Activated CD8-positive, alpha-beta T cell treated with anti-CD3 and anti-CD28 coated beads for 36 hours (primary cell): ENCODE measurements at regions of chr2 and their contacts with region 1.

Region 1: DNA sequence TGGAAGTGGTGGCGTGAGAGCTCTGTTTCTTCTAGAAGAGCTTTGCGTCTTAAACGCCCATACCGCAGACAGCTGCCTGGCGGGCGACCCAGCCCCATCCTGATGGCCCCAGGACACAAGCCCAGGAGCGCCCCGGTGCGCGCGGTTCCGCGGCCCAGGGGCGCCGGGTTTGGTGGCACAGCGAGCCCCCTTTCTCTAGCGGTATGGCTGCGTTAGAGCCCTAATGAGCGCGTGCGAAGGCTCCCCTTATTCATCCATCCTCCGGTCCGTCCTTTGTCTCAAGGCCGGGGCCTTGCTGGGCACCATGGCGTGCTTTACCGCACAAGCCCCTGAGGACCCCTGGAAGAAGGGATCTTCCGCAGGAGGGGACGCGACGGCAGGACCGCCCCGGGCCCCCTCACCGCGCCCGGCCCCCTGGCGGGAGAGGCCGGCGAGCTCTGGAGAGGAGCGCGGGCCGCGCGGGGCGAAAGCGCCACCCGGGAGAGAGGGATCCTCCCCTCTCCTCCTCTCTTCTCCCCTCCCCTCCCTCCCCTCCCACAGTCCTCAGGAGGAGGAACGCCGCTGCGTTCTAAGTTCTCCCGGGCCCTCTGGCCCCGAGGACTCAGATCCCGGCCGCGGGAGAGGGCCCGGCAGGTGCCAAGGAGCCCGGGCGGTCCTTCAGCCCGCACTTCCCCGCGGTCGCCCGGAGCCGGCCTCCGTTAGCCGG is 626 bp upstream of the SLC1A4 start:
- DNase-seq: peak; percentile 80
- ATAC-seq: peak; percentile 39
- H3K4me3 Mint-ChIP-seq: peak overlapping the region; percentile 73
- H3K27ac Mint-ChIP-seq: peak overlapping the region; percentile 73
- H3K4me1 Mint-ChIP-seq: peaks cover 48% of the 10 kb centered on the region
- H3K27me3 Mint-ChIP-seq: peaks cover 10% of the 10 kb centered on the region
- CTCF ChIP-seq: peak; percentile 48

Region 2: GRCh38 chr2:64932371-64933216 is 56.0 kb before region 1 on chr2:
- CTCF ChIA-PET with region 1: no interaction called
- POLR2A ChIA-PET with region 1: no interaction called
- intact Hi-C with region 1: no loop called
- DNase-seq: no peak
- ATAC-seq: peak; percentile 62
- H3K4me3 Mint-ChIP-seq: no peak overlapping the region
- H3K27ac Mint-ChIP-seq: no peak overlapping the region
- H3K4me1 Mint-ChIP-seq: no peaks in the 10 kb centered on the region
- H3K27me3 Mint-ChIP-seq: peaks cover 8% of the 10 kb centered on the region
- CTCF ChIP-seq: no peak

Region 3: DNA sequence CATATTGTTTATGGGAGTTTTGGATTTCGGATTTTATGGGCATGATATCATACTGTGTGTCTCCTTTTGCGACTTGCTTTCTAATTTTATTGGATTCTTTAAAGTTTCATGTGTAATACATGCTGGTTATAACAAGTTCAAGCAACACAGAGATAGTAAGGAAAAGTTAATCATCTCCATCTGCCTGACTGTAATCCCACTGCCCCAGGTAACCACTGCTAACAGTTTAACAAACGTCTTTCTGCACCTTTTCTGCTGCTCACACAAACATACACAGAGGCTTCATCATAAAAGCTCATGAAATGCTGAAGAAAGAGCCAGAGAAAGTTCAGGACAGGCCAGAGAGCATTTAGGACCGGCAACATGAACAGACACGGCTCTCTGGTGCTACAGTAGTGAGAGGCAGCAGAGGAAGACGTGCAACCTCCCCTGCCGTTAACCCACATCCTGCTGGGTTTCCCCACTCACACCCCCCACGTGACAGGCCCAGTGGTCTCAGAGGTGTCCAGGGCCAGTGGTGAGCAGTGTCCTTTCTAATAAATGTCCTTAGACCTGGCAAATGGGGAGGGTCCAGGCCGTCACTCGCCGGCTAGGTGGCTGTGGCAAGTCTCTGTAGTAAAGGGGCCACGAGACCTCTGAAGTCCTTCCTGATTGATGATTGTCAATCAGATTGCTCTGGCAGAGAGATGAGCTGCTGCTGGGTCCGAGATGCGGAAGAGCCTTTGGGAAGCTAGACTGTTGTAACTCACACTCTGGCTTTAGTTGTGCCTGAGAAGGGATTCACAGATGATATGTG is 42.4 kb before region 1 on chr2:
- CTCF ChIA-PET with region 1: interaction called, 3 read pairs
- POLR2A ChIA-PET with region 1: no interaction called
- intact Hi-C with region 1: loop called (anchors 5 kb)
- DNase-seq: peak; percentile 86
- ATAC-seq: peak; percentile 97
- H3K4me3 Mint-ChIP-seq: peak overlapping the region; percentile 70
- H3K27ac Mint-ChIP-seq: peak overlapping the region; percentile 92
- H3K4me1 Mint-ChIP-seq: peaks cover 29% of the 10 kb centered on the region
- H3K27me3 Mint-ChIP-seq: no peaks in the 10 kb centered on the region
- CTCF ChIP-seq: no peak

Region 4: DNA sequence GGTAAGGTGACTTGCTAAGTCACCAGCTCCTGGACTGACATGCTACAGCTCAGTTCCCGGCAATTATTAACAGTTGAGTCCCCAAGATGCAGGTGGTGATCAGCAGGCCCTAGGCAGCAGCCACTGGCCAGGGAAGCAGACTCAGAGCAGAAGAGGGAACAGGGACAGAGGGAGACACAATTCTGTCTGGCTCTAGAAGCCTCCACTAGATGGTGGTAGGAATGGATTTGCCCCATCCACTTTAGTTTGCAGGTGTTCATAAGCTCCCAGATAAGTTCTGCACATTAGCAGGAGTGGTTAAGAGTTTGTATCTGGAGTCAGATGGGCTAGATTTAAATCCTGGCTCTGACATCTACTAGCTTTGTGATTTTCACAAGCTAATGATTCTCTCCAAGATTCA is 24.9 kb before region 1 on chr2:
- CTCF ChIA-PET with region 1: no interaction called
- POLR2A ChIA-PET with region 1: no interaction called
- intact Hi-C with region 1: no loop called
- DNase-seq: no peak
- ATAC-seq: no peak
- H3K4me3 Mint-ChIP-seq: no peak overlapping the region
- H3K27ac Mint-ChIP-seq: no peak overlapping the region
- H3K4me1 Mint-ChIP-seq: no peaks in the 10 kb centered on the region
- H3K27me3 Mint-ChIP-seq: no peaks in the 10 kb centered on the region
- CTCF ChIP-seq: no peak

Region 5: DNA sequence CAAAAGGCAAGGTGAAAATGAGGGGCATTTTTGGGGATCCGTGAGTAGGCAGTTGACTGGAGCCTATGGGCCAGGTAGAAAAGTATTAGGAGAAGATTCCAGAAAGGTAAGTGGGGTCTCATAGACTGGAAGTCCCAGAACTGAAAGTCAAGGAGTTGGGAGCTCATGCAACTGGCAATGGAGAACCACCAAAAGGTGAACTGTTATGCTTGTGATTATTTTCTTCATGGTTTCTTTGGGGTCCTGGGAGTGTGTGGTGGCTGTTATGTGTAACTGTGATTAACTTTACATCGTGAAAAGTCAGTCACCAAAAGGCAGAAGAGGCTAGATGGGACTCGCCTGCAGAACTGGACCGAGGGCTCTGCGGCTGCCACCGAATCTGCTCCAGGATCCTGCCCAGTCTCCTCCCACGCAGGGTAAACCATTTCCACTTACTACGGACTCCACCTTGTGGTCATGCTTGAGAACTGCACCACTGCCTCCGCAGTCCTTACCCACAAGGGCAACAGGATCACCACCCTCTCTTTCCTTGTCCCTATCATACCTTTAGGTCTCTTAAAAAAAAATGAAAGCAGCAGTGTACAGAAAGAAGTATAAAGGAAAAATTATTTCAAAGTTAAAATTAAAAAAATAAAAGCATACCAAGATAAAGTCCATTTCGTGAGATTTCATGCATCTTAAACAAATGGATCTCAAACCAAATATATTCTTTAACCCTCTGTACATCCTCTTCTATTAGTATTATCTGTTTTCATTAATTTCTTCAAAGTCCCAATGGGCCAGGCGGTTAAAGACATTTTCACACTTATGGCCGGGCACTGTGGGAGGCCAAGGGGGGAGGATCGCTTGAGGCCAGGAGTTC is 52.1 kb after region 1 on chr2:
- CTCF ChIA-PET with region 1: interaction called, 4 read pairs
- POLR2A ChIA-PET with region 1: no interaction called
- intact Hi-C with region 1: loop called (anchors 5 kb)
- DNase-seq: peak; percentile 87
- ATAC-seq: peak; percentile 97
- H3K4me3 Mint-ChIP-seq: no peak overlapping the region
- H3K27ac Mint-ChIP-seq: no peak overlapping the region
- H3K4me1 Mint-ChIP-seq: peaks cover 11% of the 10 kb centered on the region
- H3K27me3 Mint-ChIP-seq: no peaks in the 10 kb centered on the region
- CTCF ChIP-seq: peak; percentile 99